AG04449 (cell line): ENCODE measurements at regions of chr19 and their contacts with region 1.

Region 1: DNA sequence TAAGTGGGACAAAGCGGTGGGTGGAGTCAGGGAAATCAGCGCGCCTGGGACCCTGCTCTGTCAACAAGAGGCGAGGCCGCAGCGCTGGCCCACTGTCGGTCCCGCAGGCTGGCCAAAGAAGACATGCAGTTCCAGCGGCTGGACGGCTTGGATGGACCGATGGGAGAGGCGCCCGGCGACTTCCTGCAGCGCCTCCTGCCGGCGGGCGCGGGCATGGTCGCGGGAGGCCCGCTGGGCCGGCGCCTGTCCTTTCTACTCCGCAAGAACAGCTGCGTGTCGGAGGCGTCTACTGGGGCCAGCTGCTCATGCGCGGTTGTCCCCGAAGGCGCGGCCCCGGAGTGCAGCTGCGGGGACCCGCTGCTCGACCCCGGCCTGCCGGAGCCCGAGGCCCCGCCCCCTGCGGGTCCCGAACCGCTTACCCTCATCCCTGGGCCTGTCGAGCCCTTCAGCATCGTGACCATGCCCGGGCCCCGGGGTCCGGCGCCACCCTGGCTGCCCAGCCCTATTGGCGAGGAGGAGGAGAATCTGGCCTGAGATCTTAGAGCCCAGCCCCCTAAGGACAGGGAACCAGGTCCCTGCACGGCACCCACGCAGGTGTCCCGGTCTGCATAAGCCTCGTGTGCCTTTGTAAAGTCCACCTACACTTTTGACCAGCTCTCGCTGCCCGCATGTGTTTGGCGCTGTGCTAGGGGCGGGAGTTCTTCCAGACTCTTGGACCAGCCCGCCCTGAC is 6.1 kb downstream of the BEST2 start:
- DNase-seq: no peak
- H3K4me3 ChIP-seq: peak overlapping the region; percentile 50
- CTCF ChIP-seq: peak; percentile 82

Region 2: DNA sequence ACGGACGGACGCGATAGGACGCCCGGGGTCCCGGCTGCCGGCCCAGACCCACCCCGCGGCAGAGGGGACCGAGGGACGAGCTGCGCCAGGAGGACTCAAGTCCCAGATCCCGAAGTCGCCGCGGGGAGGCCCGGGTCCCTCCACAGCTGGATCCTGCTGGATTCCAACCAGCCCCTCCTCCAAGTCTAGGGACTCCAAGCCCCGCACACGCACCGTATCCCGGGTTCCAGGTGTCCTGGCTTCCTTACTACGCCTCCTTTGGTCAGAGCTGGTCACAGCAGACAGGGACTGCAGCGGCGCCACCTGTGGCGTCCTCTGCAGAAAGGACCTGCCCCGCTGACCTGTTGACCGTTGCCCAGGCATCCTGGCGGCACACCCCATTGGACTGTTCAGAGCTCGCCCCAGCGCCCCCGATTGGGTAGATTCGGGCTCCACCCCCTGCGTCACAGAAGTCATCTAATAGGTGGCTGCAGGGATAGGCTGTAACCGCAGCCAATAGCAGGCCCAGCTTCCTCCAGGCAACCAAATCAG is 244.1 kb before region 1 on chr19:
- CTCF ChIA-PET with region 1: no interaction called
- POLR2A ChIA-PET with region 1: no interaction called
- DNase-seq: no peak
- H3K4me3 ChIP-seq: no peak overlapping the region
- CTCF ChIP-seq: no peak

Region 3: GRCh38 chr19:12681074-12681951 is 76.4 kb before region 1 on chr19 and contains the start of gene DHPS:
- CTCF ChIA-PET with region 1: interaction called, 15 read pairs
- POLR2A ChIA-PET with region 1: no interaction called
- DNase-seq: peak; percentile 89
- H3K4me3 ChIP-seq: peak within 1 kb of the TSS; percentile 98
- CTCF ChIP-seq: no peak

Region 4: GRCh38 chr19:12722566-12723380 is 34.9 kb before region 1 on chr19:
- CTCF ChIA-PET with region 1: interaction called, 10 read pairs
- POLR2A ChIA-PET with region 1: no interaction called
- DNase-seq: peak; percentile 95
- H3K4me3 ChIP-seq: peak overlapping the region; percentile 80
- CTCF ChIP-seq: no peak

Region 5: DNA sequence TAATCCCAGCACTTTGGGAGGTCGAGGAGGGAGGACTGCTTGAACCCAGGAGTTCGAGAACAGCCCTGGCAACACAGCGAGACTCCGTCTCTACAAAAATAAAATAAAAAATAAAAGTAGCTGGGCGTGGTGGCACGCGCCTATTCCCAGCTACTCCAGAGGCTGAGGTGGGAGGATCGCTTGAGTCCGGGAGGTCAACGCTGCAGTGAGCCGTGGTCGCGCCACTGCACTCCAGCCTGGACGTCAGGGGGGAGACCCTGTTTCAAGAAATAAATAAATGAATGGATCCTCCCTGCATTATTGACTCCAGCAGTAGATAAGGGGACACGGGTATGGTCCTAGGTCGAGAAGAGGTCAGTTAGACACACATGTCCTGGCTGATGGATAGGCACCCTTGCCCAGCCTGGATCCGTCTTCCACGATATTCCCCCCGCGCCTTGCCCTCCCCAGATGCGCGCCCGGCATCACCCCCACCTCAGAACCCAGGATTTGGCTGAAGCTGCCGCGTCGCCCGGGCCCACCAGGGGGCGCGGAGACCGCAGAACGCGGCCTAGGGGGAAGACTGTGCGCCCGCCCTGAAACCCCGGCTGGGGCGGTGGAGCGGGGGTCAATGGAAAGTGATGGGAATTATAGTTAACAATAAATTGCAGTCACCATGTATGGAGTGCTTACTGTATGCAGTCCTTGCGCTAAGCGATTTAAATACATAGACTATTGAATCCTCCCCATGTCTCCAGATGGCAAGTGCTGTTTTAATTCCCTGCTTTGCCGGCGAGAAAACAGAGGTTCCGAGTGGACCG is 19.7 kb after region 1 on chr19:
- CTCF ChIA-PET with region 1: interaction called, 311 read pairs
- POLR2A ChIA-PET with region 1: no interaction called
- DNase-seq: no peak
- H3K4me3 ChIP-seq: peak overlapping the region; percentile 67
- CTCF ChIP-seq: peak; percentile 99

Region 6: GRCh38 chr19:12825254-12826131 is 67.8 kb after region 1 on chr19:
- CTCF ChIA-PET with region 1: interaction called, 15 read pairs
- POLR2A ChIA-PET with region 1: no interaction called
- DNase-seq: no peak
- H3K4me3 ChIP-seq: peak overlapping the region; percentile 12; the same call in 1 of the 2 replicates
- CTCF ChIP-seq: peak; percentile 46